ENCODE measurements at regions of chr1 and their contacts with region 1.

Region 1: GRCh38 chr1:113072757-113073478 is at the start of gene LRIG2:
- DNase-seq: peak; percentile 96 to 99 (median 98)
- ATAC-seq: peak; percentile 96
- H3K4me3 ChIP-seq: peak within 1 kb of the TSS; percentile 84 to 91
- H3K4me3 Mint-ChIP-seq: peak within 1 kb of the TSS; percentile 99
- H3K27ac ChIP-seq: peak within 1 kb of the TSS; percentile 75 to 87
- H3K27ac Mint-ChIP-seq: peak within 1 kb of the TSS; percentile 97
- H3K4me1 ChIP-seq: peaks cover 27% of the 10 kb centered on the region
- H3K4me1 Mint-ChIP-seq: peaks cover 34% of the 10 kb centered on the region
- H3K27me3 ChIP-seq: no peaks in the 10 kb centered on the region
- H3K27me3 Mint-ChIP-seq: no peaks in the 10 kb centered on the region
- CTCF ChIP-seq: peak; percentile 93
- total RNA-seq, gene LRIG2: 13.1 to 13.8 TPM

Region 2: GRCh38 chr1:112466078-112466660 is 606.7 kb before region 1 on chr1:
- CTCF ChIA-PET with region 1: no interaction called
- POLR2A ChIA-PET with region 1: no interaction called
- intact Hi-C with region 1: loop called in 1 of 2 experiments (anchors 5 kb)
- DNase-seq: peak; percentile 66 to 90 (median 83)
- ATAC-seq: peak; percentile 95
- H3K4me3 ChIP-seq: peak overlapping the region; percentile 31 to 42
- H3K4me3 Mint-ChIP-seq: peak overlapping the region; percentile 80
- H3K27ac ChIP-seq: no peak overlapping the region
- H3K27ac Mint-ChIP-seq: no peak overlapping the region
- H3K4me1 ChIP-seq: peaks cover 8% of the 10 kb centered on the region
- H3K4me1 Mint-ChIP-seq: peaks cover 14% of the 10 kb centered on the region
- H3K27me3 ChIP-seq: peaks cover 0 to 9% of the 10 kb centered on the region in 2 experiments
- H3K27me3 Mint-ChIP-seq: peaks cover 22% of the 10 kb centered on the region
- CTCF ChIP-seq: peak; percentile 68

Region 3: GRCh38 chr1:112809253-112809684 is 263.6 kb before region 1 on chr1:
- CTCF ChIA-PET with region 1: no interaction called
- POLR2A ChIA-PET with region 1: no interaction called
- intact Hi-C with region 1: loop called in 1 of 2 experiments (anchors 5 kb)
- DNase-seq: peak; percentile 23 to 73 (median 54)
- ATAC-seq: peak; percentile 63
- H3K4me3 ChIP-seq: no peak overlapping the region
- H3K4me3 Mint-ChIP-seq: no peak overlapping the region
- H3K27ac ChIP-seq: no peak overlapping the region
- H3K27ac Mint-ChIP-seq: no peak overlapping the region
- H3K4me1 ChIP-seq: no peaks in the 10 kb centered on the region
- H3K4me1 Mint-ChIP-seq: no peaks in the 10 kb centered on the region
- H3K27me3 ChIP-seq: no peaks in the 10 kb centered on the region
- H3K27me3 Mint-ChIP-seq: peaks cover 6% of the 10 kb centered on the region
- CTCF ChIP-seq: peak; percentile 62

Region 4: GRCh38 chr1:112866151-112866550 is 206.8 kb before region 1 on chr1:
- CTCF ChIA-PET with region 1: no interaction called
- POLR2A ChIA-PET with region 1: no interaction called
- intact Hi-C with region 1: no loop called
- DNase-seq: no peak
- ATAC-seq: no peak
- H3K4me3 ChIP-seq: no peak overlapping the region
- H3K4me3 Mint-ChIP-seq: no peak overlapping the region
- H3K27ac ChIP-seq: no peak overlapping the region
- H3K27ac Mint-ChIP-seq: no peak overlapping the region
- H3K4me1 ChIP-seq: peaks cover 4% of the 10 kb centered on the region
- H3K4me1 Mint-ChIP-seq: peaks cover 5% of the 10 kb centered on the region
- H3K27me3 ChIP-seq: no peaks in the 10 kb centered on the region
- H3K27me3 Mint-ChIP-seq: peaks cover 2% of the 10 kb centered on the region
- CTCF ChIP-seq: no peak

Region 5: GRCh38 chr1:112955781-112956543 is 117.0 kb before region 1 on chr1 and contains the start of gene SLC16A1:
- CTCF ChIA-PET with region 1: interaction called, 9 read pairs
- POLR2A ChIA-PET with region 1: interaction called, 11 read pairs
- intact Hi-C with region 1: loop called (anchors 2 kb)
- DNase-seq: peak; percentile 68 to 92 (median 86)
- ATAC-seq: peak; percentile 78
- H3K4me3 ChIP-seq: peak within 1 kb of the TSS; percentile 97 to 98
- H3K4me3 Mint-ChIP-seq: peak within 1 kb of the TSS; percentile 98
- H3K27ac ChIP-seq: peak within 1 kb of the TSS; percentile 79 to 87
- H3K27ac Mint-ChIP-seq: peak within 1 kb of the TSS; percentile 90
- H3K4me1 ChIP-seq: peaks cover 25% of the 10 kb centered on the region
- H3K4me1 Mint-ChIP-seq: peaks cover 63% of the 10 kb centered on the region
- H3K27me3 ChIP-seq: no peaks in the 10 kb centered on the region
- H3K27me3 Mint-ChIP-seq: no peaks in the 10 kb centered on the region
- CTCF ChIP-seq: no peak
- total RNA-seq, gene SLC16A1: 34.0 to 34.1 TPM

Region 6: GRCh38 chr1:113088972-113089371 is 16.1 kb after region 1 on chr1:
- CTCF ChIA-PET with region 1: interaction called, 17 read pairs
- POLR2A ChIA-PET with region 1: interaction called, 4 read pairs
- intact Hi-C with region 1: no loop called
- DNase-seq: no peak
- ATAC-seq: no peak
- H3K4me3 ChIP-seq: no peak overlapping the region
- H3K4me3 Mint-ChIP-seq: no peak overlapping the region
- H3K27ac ChIP-seq: no peak overlapping the region
- H3K27ac Mint-ChIP-seq: no peak overlapping the region
- H3K4me1 ChIP-seq: no peaks in the 10 kb centered on the region
- H3K4me1 Mint-ChIP-seq: peaks cover 44% of the 10 kb centered on the region
- H3K27me3 ChIP-seq: no peaks in the 10 kb centered on the region
- H3K27me3 Mint-ChIP-seq: no peaks in the 10 kb centered on the region
- CTCF ChIP-seq: no peak

Region 7: GRCh38 chr1:113811888-113812660 is 739.2 kb after region 1 on chr1 and contains the start of gene RSBN1:
- CTCF ChIA-PET with region 1: no interaction called
- POLR2A ChIA-PET with region 1: interaction called, 4 read pairs
- intact Hi-C with region 1: loop called in 1 of 2 experiments (anchors 2 kb)
- DNase-seq: peak; percentile 96 to 99 (median 98)
- ATAC-seq: peak; percentile 91
- H3K4me3 ChIP-seq: peak within 1 kb of the TSS; percentile 89 to 98
- H3K4me3 Mint-ChIP-seq: peak within 1 kb of the TSS; percentile 93
- H3K27ac ChIP-seq: peak within 1 kb of the TSS; percentile 90 to 94
- H3K27ac Mint-ChIP-seq: peak within 1 kb of the TSS; percentile 98
- H3K4me1 ChIP-seq: peaks cover 24% of the 10 kb centered on the region
- H3K4me1 Mint-ChIP-seq: peaks cover 37% of the 10 kb centered on the region
- H3K27me3 ChIP-seq: no peaks in the 10 kb centered on the region
- H3K27me3 Mint-ChIP-seq: no peaks in the 10 kb centered on the region
- CTCF ChIP-seq: no peak
- total RNA-seq, gene RSBN1: 36.8 to 37.6 TPM

Region 8: GRCh38 chr1:114757455-114758250 is 1684.7 kb after region 1 on chr1 and contains the start of gene CSDE1:
- CTCF ChIA-PET with region 1: interaction called, 5 read pairs
- POLR2A ChIA-PET with region 1: no interaction called
- intact Hi-C with region 1: loop called in 1 of 2 experiments (anchors 2 kb)
- DNase-seq: peak; percentile 94 to 99 (median 97)
- ATAC-seq: peak; percentile 79
- H3K4me3 ChIP-seq: peak within 1 kb of the TSS; percentile 95 to 100
- H3K4me3 Mint-ChIP-seq: peak within 1 kb of the TSS; percentile 100
- H3K27ac ChIP-seq: peak within 1 kb of the TSS; percentile 97 to 100
- H3K27ac Mint-ChIP-seq: peak within 1 kb of the TSS; percentile 100
- H3K4me1 ChIP-seq: peaks cover 44% of the 10 kb centered on the region
- H3K4me1 Mint-ChIP-seq: peaks cover 51% of the 10 kb centered on the region
- H3K27me3 ChIP-seq: no peaks in the 10 kb centered on the region
- H3K27me3 Mint-ChIP-seq: no peaks in the 10 kb centered on the region
- CTCF ChIP-seq: no peak
- total RNA-seq, gene CSDE1: 732 to 774 TPM